Caco-2 (cell line): ENCODE measurements at regions of chr5 and their contacts with region 1.

Region 1: DNA sequence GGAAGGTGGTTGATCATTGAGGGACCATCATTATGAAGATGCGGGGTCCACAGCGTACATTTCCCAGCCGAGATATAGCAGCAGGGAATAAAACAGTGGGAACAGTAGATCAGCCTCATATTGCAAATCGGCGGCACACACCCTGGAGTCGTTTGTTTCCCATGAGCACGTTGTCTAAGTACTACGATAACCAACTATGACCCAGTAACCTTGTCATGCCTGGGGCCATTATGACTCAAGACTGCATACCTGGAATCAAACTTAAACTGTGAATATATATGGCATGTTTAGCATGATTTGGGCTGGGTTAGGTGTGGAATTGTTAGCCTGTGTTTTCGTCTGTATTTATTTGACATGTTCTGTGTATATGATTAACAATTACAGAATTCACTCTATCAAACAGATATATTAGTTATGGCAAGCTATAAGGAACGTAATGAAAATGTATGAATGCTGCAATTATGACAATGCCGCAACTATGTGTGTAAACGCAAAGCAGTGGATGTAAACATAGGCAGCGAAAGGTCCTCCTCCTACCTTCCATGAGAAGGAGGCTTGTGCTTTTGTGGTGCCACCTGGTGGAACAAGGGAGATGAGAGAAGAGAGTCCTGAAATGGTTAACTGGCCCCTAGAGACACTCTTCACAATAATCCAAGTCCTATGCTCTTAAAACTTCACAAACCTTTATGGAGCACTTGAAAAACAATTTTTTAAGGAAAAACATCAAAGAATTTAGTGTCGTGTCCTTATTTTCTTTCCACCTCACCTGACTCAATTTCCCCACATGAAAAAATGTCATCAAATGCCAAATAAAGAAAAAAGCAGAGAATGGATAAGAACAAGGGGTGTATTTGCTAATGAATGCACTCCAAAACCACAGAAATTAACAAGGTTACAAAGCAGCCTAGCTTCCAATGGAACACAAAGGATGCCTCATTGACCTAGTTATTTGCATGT is 47.1 kb downstream of the SEMA5A start:
- DNase-seq: peak; percentile 44 to 49
- H3K4me3 ChIP-seq: no peak overlapping the region
- H3K4me3 Mint-ChIP-seq: no peak overlapping the region
- H3K27ac Mint-ChIP-seq: no peak overlapping the region
- H3K4me1 ChIP-seq: no peaks in the 10 kb centered on the region
- H3K4me1 Mint-ChIP-seq: no peaks in the 10 kb centered on the region
- H3K27me3 ChIP-seq: no peaks in the 10 kb centered on the region
- H3K27me3 Mint-ChIP-seq: no peaks in the 10 kb centered on the region
- CTCF ChIP-seq: peak; percentile 47 to 64

Region 2: GRCh38 chr5:9156282-9156681 is 342.5 kb before region 1 on chr5:
- CTCF ChIA-PET with region 1: no interaction called
- POLR2A ChIA-PET with region 1: no interaction called
- intact Hi-C with region 1: loop called (anchors 1 kb)
- DNase-seq: peak; percentile 69 to 73
- H3K4me3 ChIP-seq: no peak overlapping the region
- H3K4me3 Mint-ChIP-seq: no peak overlapping the region
- H3K27ac Mint-ChIP-seq: no peak overlapping the region
- H3K4me1 ChIP-seq: peaks cover 13% of the 10 kb centered on the region
- H3K4me1 Mint-ChIP-seq: peaks cover 16% of the 10 kb centered on the region
- H3K27me3 ChIP-seq: no peaks in the 10 kb centered on the region
- H3K27me3 Mint-ChIP-seq: no peaks in the 10 kb centered on the region
- CTCF ChIP-seq: peak; percentile 64 to 84

Region 3: GRCh38 chr5:9361835-9362234 is 137.0 kb before region 1 on chr5:
- CTCF ChIA-PET with region 1: no interaction called
- POLR2A ChIA-PET with region 1: no interaction called
- intact Hi-C with region 1: loop called (anchors 1 kb)
- DNase-seq: peak; percentile 58 to 65
- H3K4me3 ChIP-seq: no peak overlapping the region
- H3K4me3 Mint-ChIP-seq: no peak overlapping the region
- H3K27ac Mint-ChIP-seq: no peak overlapping the region
- H3K4me1 ChIP-seq: peaks cover 24% of the 10 kb centered on the region; the same call in 1 of the 2 replicates
- H3K4me1 Mint-ChIP-seq: peaks cover 30% of the 10 kb centered on the region
- H3K27me3 ChIP-seq: no peaks in the 10 kb centered on the region
- H3K27me3 Mint-ChIP-seq: no peaks in the 10 kb centered on the region
- CTCF ChIP-seq: peak; percentile 72 to 73

Region 4: GRCh38 chr5:9456435-9457042 is 42.3 kb before region 1 on chr5:
- CTCF ChIA-PET with region 1: no interaction called
- POLR2A ChIA-PET with region 1: no interaction called
- intact Hi-C with region 1: no loop called
- DNase-seq: no peak
- H3K4me3 ChIP-seq: no peak overlapping the region
- H3K4me3 Mint-ChIP-seq: no peak overlapping the region
- H3K27ac Mint-ChIP-seq: no peak overlapping the region
- H3K4me1 ChIP-seq: no peaks in the 10 kb centered on the region
- H3K4me1 Mint-ChIP-seq: no peaks in the 10 kb centered on the region
- H3K27me3 ChIP-seq: no peaks in the 10 kb centered on the region
- H3K27me3 Mint-ChIP-seq: no peaks in the 10 kb centered on the region
- CTCF ChIP-seq: no peak